ENCODE measurements at regions of chr7 and their contacts with region 1.

Region 1: DNA sequence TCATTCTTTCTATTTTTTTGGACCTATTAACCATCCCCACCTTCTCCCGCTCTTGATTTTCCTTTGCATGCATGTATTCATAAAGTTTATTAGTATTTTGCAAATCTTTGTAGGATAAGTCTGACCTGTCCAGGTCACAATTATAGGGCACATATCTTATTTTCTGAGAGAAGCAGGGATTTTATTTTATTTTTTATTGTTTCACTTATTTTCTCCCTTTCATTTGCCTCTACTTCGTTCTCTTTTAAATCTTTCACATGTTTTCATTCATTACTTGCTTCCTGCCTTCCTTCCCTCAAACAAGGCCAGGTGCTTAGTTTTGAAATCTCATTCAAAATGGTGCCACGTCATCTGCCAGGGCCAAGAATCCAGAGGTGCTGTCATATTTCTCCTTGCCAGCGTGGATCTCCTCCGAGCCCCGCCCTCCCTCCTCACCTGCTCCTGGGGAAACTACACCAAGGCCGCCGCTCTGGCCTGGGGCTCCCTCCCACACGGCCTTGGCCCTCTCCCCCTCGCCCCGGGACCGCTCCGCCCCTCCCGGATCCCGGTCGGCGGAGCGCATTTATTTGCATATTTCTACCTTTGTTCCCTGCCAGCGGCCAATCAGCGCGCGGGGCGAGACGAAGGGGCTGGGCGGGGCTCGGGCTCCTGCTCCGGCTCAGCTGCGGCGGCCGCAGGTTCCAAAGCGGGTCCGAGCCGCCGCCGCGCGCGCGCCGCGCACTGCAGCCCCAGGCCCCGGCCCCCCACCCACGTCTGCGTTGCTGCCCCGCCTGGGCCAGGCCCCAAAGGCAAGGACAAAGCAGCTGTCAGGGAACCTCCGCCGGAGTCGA is at the start of gene TSPAN13:
- DNase-seq: peak; percentile 95
- H3K4me3 Mint-ChIP-seq: peak within 1 kb of the TSS; percentile 83
- H3K27ac Mint-ChIP-seq: peak within 1 kb of the TSS; percentile 65
- H3K4me1 Mint-ChIP-seq: peaks cover 20% of the 10 kb centered on the region
- H3K27me3 Mint-ChIP-seq: no peaks in the 10 kb centered on the region
- CTCF ChIP-seq: no peak
- total RNA-seq, gene TSPAN13: 14.0 and 14.1 TPM in 2 replicates

Region 2: DNA sequence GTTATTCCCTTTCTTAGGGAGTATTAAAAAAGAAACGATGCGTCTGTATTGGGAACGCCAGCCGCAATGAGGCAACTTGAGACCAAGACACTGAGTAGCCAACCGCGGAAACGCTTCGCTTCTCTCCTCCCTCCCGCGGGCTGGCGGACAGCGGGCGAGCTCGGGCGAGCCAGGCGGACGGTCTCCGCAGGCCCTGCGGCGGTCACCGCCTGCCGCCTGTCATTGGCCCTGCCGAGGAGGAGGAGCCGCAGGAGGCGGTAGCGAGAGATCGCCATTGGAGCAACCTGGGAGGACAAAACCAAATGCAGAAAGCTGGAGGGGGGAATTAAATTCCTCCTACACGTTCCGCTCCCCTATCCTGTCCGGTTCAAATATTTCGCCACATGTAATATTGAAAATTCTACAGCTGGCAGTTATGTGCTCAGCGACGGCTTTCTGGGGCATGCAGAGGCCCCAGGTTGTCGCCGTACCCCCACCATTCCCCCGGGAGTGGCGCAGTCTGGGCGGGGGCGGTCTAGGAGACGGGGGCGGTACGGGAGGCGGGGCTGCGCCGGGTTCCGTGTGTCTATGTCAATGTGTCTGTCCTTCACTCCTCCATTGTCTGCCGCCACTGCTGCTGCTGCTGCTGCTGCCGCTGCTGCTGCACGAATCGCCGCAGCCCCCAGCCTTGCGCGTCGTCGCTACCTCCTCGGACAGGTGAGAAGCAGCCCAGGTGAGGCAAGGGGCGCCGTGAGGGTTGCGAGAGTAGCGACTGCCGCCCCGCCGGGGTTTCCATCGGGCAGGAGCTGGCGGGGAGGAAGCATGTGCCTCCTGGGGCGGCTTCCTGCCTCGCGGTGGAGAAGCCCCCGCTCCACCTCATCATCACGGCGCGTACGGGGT is 107.5 kb before region 1 on chr7 and contains the starts of genes ANKMY2 and BZW2:
- CTCF ChIA-PET with region 1: interaction called, 3 read pairs
- POLR2A ChIA-PET with region 1: interaction called, 6 read pairs
- intact Hi-C with region 1: loop called (anchors 5 kb)
- DNase-seq: peak; percentile 96
- H3K4me3 Mint-ChIP-seq: peak within 1 kb of the TSS; percentile 86
- H3K27ac Mint-ChIP-seq: peak within 1 kb of the TSS; percentile 97
- H3K4me1 Mint-ChIP-seq: peaks cover 38% of the 10 kb centered on the region
- H3K27me3 Mint-ChIP-seq: no peaks in the 10 kb centered on the region
- CTCF ChIP-seq: no peak
- total RNA-seq, gene ANKMY2: 14.3 and 15.3 TPM in 2 replicates
- total RNA-seq, gene BZW2: 41.0 and 85.4 TPM in 2 replicates

Region 3: GRCh38 chr7:16734148-16734726 is 19.1 kb before region 1 on chr7:
- CTCF ChIA-PET with region 1: no interaction called
- POLR2A ChIA-PET with region 1: interaction called, 3 read pairs
- intact Hi-C with region 1: loop called (anchors 1 kb)
- DNase-seq: peak; percentile 23
- H3K4me3 Mint-ChIP-seq: no peak overlapping the region
- H3K27ac Mint-ChIP-seq: no peak overlapping the region
- H3K4me1 Mint-ChIP-seq: peaks cover 12% of the 10 kb centered on the region
- H3K27me3 Mint-ChIP-seq: no peaks in the 10 kb centered on the region
- CTCF ChIP-seq: no peak

Region 4: DNA sequence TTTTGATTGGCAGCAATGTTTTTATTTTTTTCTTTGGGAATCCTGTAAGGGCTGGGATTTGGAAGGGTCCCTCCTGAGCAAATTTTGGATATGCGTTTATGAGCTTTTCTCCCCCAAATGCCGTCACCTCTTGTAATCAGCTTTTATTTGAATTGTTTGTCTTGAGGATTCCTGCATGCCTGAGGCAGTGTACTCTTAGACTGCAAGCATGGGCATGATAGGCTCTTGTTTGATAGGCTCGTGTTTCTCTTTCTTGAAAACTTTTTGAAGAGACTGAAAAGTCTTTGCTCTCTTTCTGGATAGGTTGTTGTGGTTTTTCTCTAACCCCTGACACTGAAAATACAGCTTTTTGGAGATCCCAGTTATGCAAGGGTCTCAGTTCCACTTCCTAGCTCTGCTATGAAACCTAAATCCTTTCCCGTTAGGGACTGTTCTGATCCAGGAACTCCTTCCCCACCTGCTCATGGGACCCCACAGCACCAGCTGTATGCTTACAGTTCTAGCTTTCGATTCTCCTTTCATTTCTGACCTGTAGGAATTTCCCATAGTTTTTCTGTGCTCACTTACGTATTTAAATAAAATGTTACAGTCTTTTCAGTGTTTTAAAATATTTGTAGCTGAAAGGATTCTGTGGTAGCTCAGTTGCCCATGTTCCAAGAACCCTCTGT is 17.5 kb after region 1 on chr7:
- CTCF ChIA-PET with region 1: interaction called, 7 read pairs
- POLR2A ChIA-PET with region 1: interaction called, 85 read pairs
- intact Hi-C with region 1: no loop called
- DNase-seq: peak; percentile 51
- H3K4me3 Mint-ChIP-seq: peak overlapping the region; percentile 56
- H3K27ac Mint-ChIP-seq: peak overlapping the region; percentile 65
- H3K4me1 Mint-ChIP-seq: peaks cover 24% of the 10 kb centered on the region
- H3K27me3 Mint-ChIP-seq: no peaks in the 10 kb centered on the region
- CTCF ChIP-seq: no peak

Measured in MCF 10A (cell line).